Activated naive CD4-positive, alpha-beta T cell treated with anti-CD3 and anti-CD28 coated beads for 36 hours (primary cell): ENCODE measurements at regions of chr6 and their contacts with region 1.

Region 1: GRCh38 chr6:149235130-149235561 is 82.4 kb upstream of the TAB2 start:
- DNase-seq: no peak
- H3K4me3 Mint-ChIP-seq: no peak overlapping the region
- H3K27ac Mint-ChIP-seq: peak overlapping the region; percentile 95
- H3K4me1 Mint-ChIP-seq: peaks cover 49% of the 10 kb centered on the region
- H3K27me3 Mint-ChIP-seq: no peaks in the 10 kb centered on the region

Region 2: GRCh38 chr6:149082286-149082707 is 152.8 kb before region 1 on chr6:
- CTCF ChIA-PET with region 1: interaction called, 3 read pairs
- intact Hi-C with region 1: loop called (anchors 1 kb)
- DNase-seq: peak; percentile 97
- H3K4me3 Mint-ChIP-seq: no peak overlapping the region
- H3K27ac Mint-ChIP-seq: peak overlapping the region; percentile 41
- H3K4me1 Mint-ChIP-seq: peaks cover 54% of the 10 kb centered on the region
- H3K27me3 Mint-ChIP-seq: no peaks in the 10 kb centered on the region

Region 3: DNA sequence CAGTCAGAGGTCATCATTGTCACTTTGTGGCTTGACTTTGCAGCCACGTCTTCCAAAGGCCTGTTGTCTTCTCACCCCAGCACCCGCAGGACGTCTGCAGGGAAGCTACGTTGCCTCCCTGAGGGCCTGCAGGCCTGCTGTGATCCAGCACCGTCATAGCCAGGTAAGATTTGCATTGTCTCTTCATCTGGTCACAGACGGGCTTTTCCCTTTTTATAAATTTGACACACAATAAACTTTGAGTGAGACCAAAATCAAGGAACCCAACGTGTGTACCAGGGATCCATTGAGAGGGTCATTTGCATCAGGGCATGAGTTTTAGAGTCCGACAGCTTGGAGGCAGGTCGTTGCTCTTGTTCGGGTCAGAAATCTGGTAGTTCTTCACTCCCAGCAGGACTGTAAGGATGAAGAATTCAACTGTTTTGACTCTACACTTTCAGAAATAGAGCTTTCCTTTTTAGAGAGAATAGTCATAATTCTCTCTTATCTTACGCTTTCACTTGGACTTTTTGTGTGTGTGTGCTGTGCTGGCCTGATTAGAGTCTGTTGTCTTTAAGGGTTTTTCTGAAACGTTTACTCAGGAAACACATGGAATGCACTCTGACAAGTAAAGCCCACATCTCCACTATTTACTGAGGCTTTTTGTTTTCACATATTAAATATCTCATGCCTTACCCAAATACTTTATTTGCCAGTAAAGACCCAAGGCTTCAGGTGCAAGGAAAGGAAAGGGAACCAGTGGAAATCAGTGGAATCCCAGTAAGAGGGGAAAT is 94.8 kb before region 1 on chr6:
- CTCF ChIA-PET with region 1: no interaction called
- intact Hi-C with region 1: loop called (anchors 1 kb)
- DNase-seq: peak; percentile 87
- H3K4me3 Mint-ChIP-seq: peak overlapping the region; percentile 66
- H3K27ac Mint-ChIP-seq: peak overlapping the region; percentile 94
- H3K4me1 Mint-ChIP-seq: peaks cover 42% of the 10 kb centered on the region
- H3K27me3 Mint-ChIP-seq: no peaks in the 10 kb centered on the region

Region 4: DNA sequence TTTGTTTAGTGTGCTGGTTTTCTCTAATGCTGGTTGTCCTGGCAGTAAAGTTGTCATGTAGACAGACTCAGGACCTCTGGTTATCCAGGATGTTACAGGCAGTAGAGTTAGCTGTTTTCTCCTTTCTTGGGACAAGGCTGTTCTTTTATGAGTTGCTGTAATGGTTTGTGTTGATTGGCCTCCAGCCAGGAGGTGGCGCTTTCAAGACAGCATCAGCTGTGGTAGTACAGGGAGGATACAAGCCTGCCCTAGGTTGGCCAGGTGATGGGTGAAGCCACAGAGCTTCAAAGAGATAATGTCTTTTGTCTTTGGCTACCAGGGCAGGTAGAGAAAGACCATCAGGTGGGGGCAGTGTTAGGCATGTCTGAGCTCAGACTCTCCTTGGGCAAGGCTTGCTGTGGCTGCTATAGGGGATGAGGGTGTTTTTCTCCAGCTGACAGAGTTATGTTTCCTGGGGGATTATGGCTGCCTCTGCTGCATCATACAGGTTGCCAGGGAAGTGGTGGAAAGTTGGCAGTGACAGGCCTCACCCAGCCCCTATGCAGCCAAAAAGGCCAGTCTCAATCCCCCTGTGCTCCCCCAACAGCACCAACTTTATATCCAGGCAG is 44.8 kb before region 1 on chr6:
- CTCF ChIA-PET with region 1: interaction called, 4 read pairs
- intact Hi-C with region 1: loop called (anchors 2 kb)
- DNase-seq: peak; percentile 87
- H3K4me3 Mint-ChIP-seq: no peak overlapping the region
- H3K27ac Mint-ChIP-seq: no peak overlapping the region
- H3K4me1 Mint-ChIP-seq: peaks cover 19% of the 10 kb centered on the region
- H3K27me3 Mint-ChIP-seq: no peaks in the 10 kb centered on the region

Region 5: GRCh38 chr6:149271348-149272340 is 36.5 kb after region 1 on chr6:
- CTCF ChIA-PET with region 1: no interaction called
- intact Hi-C with region 1: loop called (anchors 1 kb)
- DNase-seq: peak; percentile 68
- H3K4me3 Mint-ChIP-seq: peak overlapping the region; percentile 48
- H3K27ac Mint-ChIP-seq: peak overlapping the region; percentile 89
- H3K4me1 Mint-ChIP-seq: peaks cover 35% of the 10 kb centered on the region
- H3K27me3 Mint-ChIP-seq: no peaks in the 10 kb centered on the region

Region 6: DNA sequence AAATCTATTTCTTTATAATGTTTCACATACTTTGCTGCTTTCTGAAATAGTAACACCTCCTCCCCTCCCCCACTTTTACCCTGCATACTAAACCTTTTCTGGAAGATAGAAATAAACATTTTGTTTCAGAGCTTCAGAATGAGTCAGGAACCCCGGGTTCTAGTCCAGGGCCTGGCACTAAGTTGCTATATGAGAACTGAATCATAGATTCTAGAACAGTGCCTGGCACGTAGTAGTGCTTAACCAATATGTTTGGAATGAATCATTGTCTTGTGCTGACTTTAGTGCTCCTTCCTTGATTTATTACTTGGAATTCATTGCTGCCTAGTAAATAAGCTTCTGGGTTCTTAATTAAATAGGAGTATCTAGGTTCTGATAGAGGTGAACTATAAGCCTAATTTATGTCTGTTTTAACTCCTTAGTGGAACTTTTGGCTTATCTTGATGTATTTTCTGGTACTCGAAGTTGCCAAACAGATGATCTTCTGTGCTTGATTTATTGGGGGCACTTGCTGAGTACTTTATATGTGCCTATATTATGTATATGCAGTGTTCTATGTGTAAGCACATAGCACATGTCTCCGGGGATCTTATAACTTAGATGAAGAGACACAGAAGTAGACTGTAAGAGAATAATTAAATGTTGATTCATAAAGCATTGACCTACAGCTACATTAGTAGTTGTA is 100.9 kb after region 1 on chr6:
- CTCF ChIA-PET with region 1: no interaction called
- intact Hi-C with region 1: loop called (anchors 1 kb)
- DNase-seq: peak; percentile 84
- H3K4me3 Mint-ChIP-seq: peak overlapping the region; percentile 59
- H3K27ac Mint-ChIP-seq: peak overlapping the region; percentile 97
- H3K4me1 Mint-ChIP-seq: peaks cover 82% of the 10 kb centered on the region
- H3K27me3 Mint-ChIP-seq: no peaks in the 10 kb centered on the region